ENCODE measurements at regions of chr11 and their contacts with region 1.

Region 1: GRCh38 chr11:62787005-62787759 is at the start of gene TMEM179B:
- DNase-seq: peak; percentile 99 to 100
- ATAC-seq: peak; percentile 79
- total RNA-seq, gene TMEM179B: 50.9 to 58.2 TPM

Region 2: GRCh38 chr11:62344210-62344609 is 443.0 kb before region 1 on chr11:
- intact Hi-C with region 1: no loop called
- DNase-seq: no peak
- ATAC-seq: no peak

Region 3: DNA sequence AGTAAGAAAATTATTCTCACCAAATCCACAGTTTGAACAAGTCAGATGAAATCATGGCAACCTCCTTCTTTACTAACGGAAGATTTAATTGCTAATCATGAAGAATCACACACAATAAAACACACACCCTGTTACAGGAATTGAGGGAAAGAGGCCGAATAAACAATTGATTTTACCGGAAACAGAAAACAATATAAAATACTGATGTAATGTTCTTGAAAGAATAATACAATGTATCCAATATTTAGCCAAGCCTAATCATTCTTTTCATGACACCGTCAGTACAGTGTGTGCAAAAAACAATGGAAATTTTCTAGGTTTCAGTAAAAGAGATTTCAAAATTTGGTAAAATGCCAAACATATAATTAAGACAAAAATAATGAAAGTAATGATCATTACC is 426.5 kb before region 1 on chr11:
- intact Hi-C with region 1: no loop called
- DNase-seq: no peak
- ATAC-seq: no peak

Region 4: GRCh38 chr11:62514151-62514550 is 273.0 kb before region 1 on chr11:
- intact Hi-C with region 1: no loop called
- DNase-seq: no peak
- ATAC-seq: no peak

Region 5: DNA sequence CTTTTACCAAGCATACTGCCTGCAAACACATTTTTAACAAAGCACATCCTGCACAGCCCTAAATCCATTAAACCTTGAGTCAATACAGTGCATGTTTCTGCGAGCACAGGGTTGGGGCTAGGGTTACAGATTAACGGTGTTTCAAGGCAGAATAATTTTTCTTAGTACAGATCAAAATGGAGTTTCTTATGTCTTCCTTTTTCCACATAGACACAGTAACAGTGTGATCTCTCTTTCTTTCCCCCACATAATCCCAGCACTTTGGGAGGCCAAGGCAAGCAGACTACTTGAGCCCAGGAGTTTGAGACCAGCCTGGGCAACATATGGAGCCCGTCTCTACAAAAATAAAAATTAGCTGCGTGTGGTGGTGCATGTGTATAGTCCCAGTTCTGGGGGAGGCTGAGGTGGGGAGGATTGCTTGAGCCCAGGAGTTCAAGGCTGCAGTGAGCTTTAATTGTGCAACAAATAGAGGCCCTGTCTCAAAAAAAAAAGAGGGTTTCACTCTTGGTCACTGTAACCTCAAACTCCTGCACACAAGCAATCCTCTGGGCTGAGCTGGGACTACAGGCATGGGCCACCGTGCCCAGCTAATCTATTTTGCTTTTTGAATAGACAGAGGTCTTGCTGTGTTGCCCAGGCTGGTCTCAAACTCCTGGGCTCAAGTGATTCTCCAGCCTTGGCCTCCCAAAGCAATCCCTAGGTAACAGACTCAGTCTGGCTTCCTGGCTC is 73.8 kb after region 1 on chr11:
- intact Hi-C with region 1: loop called in 1 of 2 experiments (anchors 5 kb)
- DNase-seq: no peak
- ATAC-seq: no peak

Measured in left colon (tissue), 2 donors.